GM10248 (cell line): ENCODE measurements at regions of chr2 and their contacts with region 1.

Region 1: DNA sequence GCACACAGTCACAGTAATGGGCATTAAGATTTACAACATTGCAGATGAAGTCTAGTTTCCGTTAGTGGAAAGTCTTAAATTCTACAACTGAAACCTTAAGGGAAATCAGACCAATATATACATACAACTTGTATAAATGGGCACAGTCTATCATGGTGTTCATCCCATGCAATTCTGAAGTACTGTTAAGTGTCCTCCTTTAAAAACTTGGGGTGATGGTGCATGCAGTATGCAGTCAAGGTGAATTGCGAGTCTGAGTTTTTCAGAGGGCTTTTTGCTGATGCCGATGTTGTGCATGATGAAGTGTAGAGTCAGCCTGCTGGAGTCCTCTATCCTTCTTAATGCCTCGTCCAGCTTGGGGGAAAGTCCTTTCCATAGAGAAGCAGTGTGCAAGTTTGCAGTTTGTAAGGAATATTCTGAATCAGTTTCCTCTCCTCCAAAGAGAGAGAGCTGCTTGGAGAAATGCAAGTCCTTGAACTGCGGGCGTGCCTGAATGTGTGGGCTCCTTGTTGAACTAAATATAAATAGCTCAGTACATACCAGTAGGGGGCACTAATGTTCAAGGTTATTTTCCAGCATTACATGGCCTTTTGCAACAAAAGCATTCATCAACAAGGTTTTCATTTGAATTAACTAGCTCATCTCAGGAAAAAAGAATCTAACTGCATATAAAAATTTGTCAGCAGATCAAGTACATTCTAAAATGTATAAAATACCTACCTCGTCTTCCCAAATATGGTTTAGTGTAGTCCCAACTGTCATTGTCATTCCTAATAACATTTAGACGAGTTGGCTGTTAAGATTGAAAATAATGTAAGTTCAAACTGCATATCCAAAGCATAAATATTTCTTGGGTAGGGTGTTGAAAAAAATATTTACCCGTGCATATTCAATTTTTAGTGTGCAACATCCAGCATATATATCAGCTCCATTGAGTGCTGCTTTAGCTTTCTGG is 21.3 kb downstream of the HNRNPLL start:
- DNase-seq: peak; percentile 26
- CTCF ChIP-seq: peak; percentile 60

Region 2: GRCh38 chr2:38554973-38555595 is 26.4 kb before region 1 on chr2:
- CTCF ChIA-PET with region 1: interaction called, 15 read pairs
- POLR2A ChIA-PET with region 1: no interaction called
- DNase-seq: no peak
- CTCF ChIP-seq: peak; percentile 30

Region 3: DNA sequence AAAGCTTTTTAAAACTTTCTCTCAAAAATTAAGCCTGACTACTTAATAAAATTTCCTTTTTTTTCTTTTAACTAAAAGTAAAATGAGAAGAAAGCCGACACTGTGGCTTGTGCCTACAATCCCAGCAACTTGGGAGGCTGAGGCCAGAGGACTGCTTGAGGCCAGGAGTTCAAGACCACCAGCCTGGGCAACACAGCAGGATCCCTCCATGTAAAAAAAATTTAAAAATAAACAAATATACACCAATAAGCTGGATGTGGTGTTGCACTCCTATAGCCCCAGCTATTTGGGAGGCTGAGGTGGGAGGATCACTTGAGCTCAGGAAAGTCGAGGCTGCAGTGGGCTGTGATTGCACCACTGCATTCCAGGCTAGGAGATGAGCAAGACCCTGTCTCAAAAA is 16.1 kb before region 1 on chr2:
- CTCF ChIA-PET with region 1: interaction called, 44 read pairs
- POLR2A ChIA-PET with region 1: no interaction called
- DNase-seq: no peak
- CTCF ChIP-seq: no peak

Region 4: DNA sequence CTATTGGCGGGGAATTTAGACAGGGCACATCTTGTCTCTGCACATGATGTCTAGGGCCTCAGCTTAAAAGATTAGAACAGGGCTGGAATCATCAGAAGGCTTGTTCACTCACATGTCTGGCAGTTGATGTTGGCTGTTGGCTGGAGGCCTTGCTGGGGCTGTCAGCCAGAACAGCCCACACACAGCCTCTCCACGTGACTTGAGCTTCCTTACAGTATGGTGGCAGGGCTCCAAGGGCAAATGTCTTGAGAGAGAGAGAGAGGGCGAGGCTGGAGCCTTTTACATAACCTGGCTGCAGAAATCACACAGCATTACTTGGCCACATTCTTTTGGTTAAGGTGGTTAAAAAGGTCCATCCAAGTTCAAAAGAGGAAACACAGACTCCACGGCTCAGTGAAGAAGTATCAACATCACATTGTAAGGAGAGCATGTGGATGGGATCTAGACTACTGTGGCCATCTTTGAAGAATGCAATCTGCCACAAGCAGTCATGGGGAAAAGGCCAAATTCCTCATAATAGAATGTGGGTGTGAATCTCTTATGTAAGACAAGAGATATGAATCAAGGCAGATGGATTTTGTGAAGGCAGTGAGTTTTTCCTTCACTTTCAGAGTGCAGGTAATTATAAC is 139.3 kb after region 1 on chr2:
- CTCF ChIA-PET with region 1: interaction called, 333 read pairs
- POLR2A ChIA-PET with region 1: no interaction called
- DNase-seq: no peak
- CTCF ChIP-seq: no peak

Region 5: DNA sequence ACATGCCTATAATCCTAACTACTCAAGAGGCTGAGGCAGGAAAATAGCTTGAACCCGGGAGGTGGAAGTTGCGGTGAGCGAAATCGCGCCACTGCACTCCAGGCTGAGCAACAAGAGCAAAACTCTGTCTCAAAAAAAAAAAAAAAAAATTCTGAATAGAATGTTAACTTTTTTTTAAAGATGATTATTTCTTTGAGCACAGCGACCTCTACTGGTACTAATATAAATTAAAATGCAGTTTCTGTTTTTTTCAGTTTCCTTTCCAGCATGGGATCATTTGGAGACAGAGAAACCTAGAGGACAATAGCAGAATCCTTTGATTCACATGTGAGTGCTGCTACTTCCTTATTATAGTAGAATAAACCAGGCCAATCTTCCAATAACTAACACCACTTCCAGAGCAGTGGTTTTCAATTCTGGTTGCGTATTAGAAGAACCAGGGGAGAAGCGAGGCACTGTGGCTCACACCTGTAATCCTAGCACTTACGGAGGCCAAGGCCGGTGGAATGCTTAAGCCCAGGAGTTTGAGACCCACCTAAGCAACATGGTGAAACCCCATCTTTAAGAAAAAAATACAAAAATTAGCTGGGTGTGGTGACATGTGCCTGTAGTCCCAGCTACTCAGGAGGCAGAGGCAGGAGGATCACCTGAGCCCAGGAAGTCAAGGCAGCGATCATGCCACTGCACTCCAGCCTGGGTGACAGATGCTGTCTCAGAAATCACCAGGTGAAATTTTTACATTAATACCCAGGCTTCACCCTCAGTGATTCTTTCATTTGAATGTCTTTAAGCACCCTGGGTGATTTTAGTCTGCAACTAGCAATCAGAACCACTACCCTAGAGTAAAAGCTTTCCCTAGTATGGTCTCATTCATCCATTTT is 159.6 kb after region 1 on chr2:
- CTCF ChIA-PET with region 1: interaction called, 333 read pairs
- POLR2A ChIA-PET with region 1: interaction called, 7 read pairs
- DNase-seq: no peak
- CTCF ChIP-seq: peak; percentile 34